ENCODE measurements at regions of chr14 and their contacts with region 1.

Region 1: GRCh38 chr14:77320238-77320935 is at the start of gene POMT2:
- DNase-seq: peak; percentile 92 to 98 (median 96)
- H3K4me3 ChIP-seq: peak within 1 kb of the TSS; percentile 81 to 100 (median 96)
- H3K27ac ChIP-seq: peak within 1 kb of the TSS; percentile 91 to 100 (median 99)
- H3K27me3 ChIP-seq: no peaks in the 10 kb centered on the region
- CTCF ChIP-seq: peak in 54 of 56 donors; percentile 8 to 74 (median 50)
- total RNA-seq, gene POMT2: 25.0 to 76.5 (median 44.0) TPM

Region 2: GRCh38 chr14:77151918-77152588 is 168.3 kb before region 1 on chr14:
- intact Hi-C with region 1: loop called (anchors 5 kb)
- DNase-seq: no peak
- H3K4me3 ChIP-seq: no peak overlapping the region
- H3K27ac ChIP-seq: peak overlapping the region in 12 of 59 donors; percentile 0 to 63 (median 26)
- H3K27me3 ChIP-seq: no peaks in the 10 kb centered on the region
- CTCF ChIP-seq: peak in 53 of 56 donors; percentile 28 to 67 (median 48)

Region 3: GRCh38 chr14:77301103-77301502 is 19.3 kb before region 1 on chr14:
- intact Hi-C with region 1: loop called (anchors 1 to 2 kb)
- DNase-seq: peak; percentile 65 to 94 (median 88)
- H3K4me3 ChIP-seq: peak overlapping the region in 28 of 59 donors; percentile 3 to 43 (median 20)
- H3K27ac ChIP-seq: peak overlapping the region in 58 of 59 donors; percentile 86 to 100 (median 99)
- H3K27me3 ChIP-seq: no peaks in the 10 kb centered on the region
- CTCF ChIP-seq: peak; percentile 69 to 99 (median 90)

Region 4: GRCh38 chr14:77376771-77377501 is 56.5 kb after region 1 on chr14 and contains the starts of genes SAMD15 and TMED8:
- intact Hi-C with region 1: loop called (anchors 2 to 5 kb)
- DNase-seq: peak; percentile 69 to 89 (median 82)
- H3K4me3 ChIP-seq: peak within 1 kb of the TSS; percentile 61 to 100 (median 88)
- H3K27ac ChIP-seq: peak within 1 kb of the TSS in 57 of 59 donors; percentile 30 to 95 (median 85)
- H3K27me3 ChIP-seq: no peaks in the 10 kb centered on the region
- CTCF ChIP-seq: peak in 55 of 56 donors; percentile 14 to 68 (median 50)
- total RNA-seq, gene SAMD15: 0.95 to 8.0 (median 3.0) TPM
- total RNA-seq, gene TMED8: 15.9 to 37.9 (median 28.6) TPM

Region 5: DNA sequence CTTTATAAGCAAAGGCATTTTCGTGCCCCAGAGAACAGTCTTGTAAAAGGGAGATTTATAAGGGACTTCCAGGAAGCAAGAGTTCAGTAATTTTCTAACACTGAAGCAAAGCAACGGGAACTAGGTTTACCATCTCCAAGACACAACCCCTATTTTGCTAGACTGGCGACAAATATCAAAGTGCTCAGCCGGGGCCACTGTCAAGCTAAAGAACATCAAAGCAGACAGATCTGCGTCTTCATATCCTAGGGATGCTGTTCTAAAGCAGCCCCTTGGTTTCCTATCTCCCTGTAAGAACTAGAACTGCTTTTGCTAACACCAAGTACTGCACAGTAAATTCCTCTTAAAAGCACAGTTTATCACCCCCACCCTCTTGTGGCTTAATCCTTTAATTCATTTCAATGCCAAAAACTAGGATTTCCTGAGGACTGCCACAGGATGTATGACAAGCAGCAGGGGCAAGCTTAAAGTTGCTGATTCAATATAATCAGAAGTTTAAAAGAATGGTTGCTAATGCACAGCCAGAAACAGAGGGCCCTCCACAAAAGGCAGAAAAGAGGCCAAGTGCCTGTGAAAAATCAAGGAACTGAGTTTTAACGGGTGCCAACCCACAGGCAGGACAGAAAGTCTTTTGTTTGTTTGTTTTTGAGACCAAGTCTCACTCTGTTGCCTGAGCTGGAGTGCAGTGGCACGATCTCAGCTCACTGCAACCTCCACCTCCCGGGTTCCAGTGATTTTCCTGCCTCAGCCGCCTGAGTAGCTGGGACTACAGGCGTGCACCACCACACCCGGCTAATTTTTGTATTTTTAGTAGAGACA is 222.2 kb after region 1 on chr14:
- intact Hi-C with region 1: loop called (anchors 5 to 10 kb)
- DNase-seq: no peak
- H3K4me3 ChIP-seq: peak overlapping the region in 16 of 59 donors; percentile 0 to 27 (median 11)
- H3K27ac ChIP-seq: peak overlapping the region; percentile 43 to 92 (median 81)
- H3K27me3 ChIP-seq: no peaks in the 10 kb centered on the region
- CTCF ChIP-seq: peak in 1 of 56 donors; percentile 12

Region 6: GRCh38 chr14:77707724-77708408 is 387.5 kb after region 1 on chr14 and contains the starts of genes ALKBH1 and SLIRP:
- intact Hi-C with region 1: loop called in 1 of 2 experiments (anchors 5 kb)
- DNase-seq: peak; percentile 79 to 94 (median 87)
- H3K4me3 ChIP-seq: peak within 1 kb of the TSS; percentile 75 to 100 (median 94)
- H3K27ac ChIP-seq: peak within 1 kb of the TSS in 50 of 59 donors; percentile 1 to 85 (median 66)
- H3K27me3 ChIP-seq: no peaks in the 10 kb centered on the region
- CTCF ChIP-seq: peak in 31 of 56 donors; percentile 9 to 52 (median 31)
- total RNA-seq, gene ALKBH1: 7.9 to 21.4 (median 12.6) TPM
- total RNA-seq, gene SLIRP: 60.9 to 153 (median 104) TPM

Measured in dorsolateral prefrontal cortex (tissue), 120 donors.